ENCODE measurements at regions of chr15 and their contacts with region 1.

Region 1: GRCh38 chr15:97248376-97248775 is 712.1 kb upstream of the ARRDC4 start:
- DNase-seq: no peak
- ATAC-seq: no peak
- H3K4me3 ChIP-seq: no peak overlapping the region
- H3K27ac ChIP-seq: no peak overlapping the region
- H3K4me1 ChIP-seq: no peaks in the 10 kb centered on the region
- H3K27me3 ChIP-seq: no peaks in the 10 kb centered on the region
- CTCF ChIP-seq: no peak
- POLR2A ChIP-seq: no peak
- RAD21 ChIP-seq: no peak

Region 2: GRCh38 chr15:97009031-97009431 is 239.3 kb before region 1 on chr15:
- CTCF ChIA-PET with region 1: no interaction called
- POLR2A ChIA-PET with region 1: no interaction called
- dilution Hi-C with region 1: no loop called
- in situ Hi-C with region 1: no loop called
- intact Hi-C with region 1: no loop called
- DNase-seq: no peak
- ATAC-seq: no peak
- H3K4me3 ChIP-seq: no peak overlapping the region
- H3K27ac ChIP-seq: no peak overlapping the region
- H3K4me1 ChIP-seq: no peaks in the 10 kb centered on the region
- H3K27me3 ChIP-seq: no peaks in the 10 kb centered on the region
- CTCF ChIP-seq: no peak
- POLR2A ChIP-seq: no peak
- RAD21 ChIP-seq: no peak

Region 3: GRCh38 chr15:97234851-97235610 is 13.3 kb before region 1 on chr15:
- CTCF ChIA-PET with region 1: interaction called, 13 read pairs
- POLR2A ChIA-PET with region 1: no interaction called
- dilution Hi-C with region 1: no loop called
- in situ Hi-C with region 1: no loop called
- intact Hi-C with region 1: no loop called
- DNase-seq: peak; percentile 39
- ATAC-seq: peak; percentile 88
- H3K4me3 ChIP-seq: no peak overlapping the region
- H3K27ac ChIP-seq: no peak overlapping the region
- H3K4me1 ChIP-seq: no peaks in the 10 kb centered on the region
- H3K27me3 ChIP-seq: no peaks in the 10 kb centered on the region
- CTCF ChIP-seq: peak; percentile 78
- POLR2A ChIP-seq: no peak
- RAD21 ChIP-seq: peak; percentile 86

Region 4: GRCh38 chr15:98292442-98293240 is 1044.3 kb after region 1 on chr15:
- CTCF ChIA-PET with region 1: no interaction called
- POLR2A ChIA-PET with region 1: no interaction called
- dilution Hi-C with region 1: no loop called
- in situ Hi-C with region 1: no loop called
- intact Hi-C with region 1: loop called (anchors 5 kb)
- DNase-seq: no peak
- ATAC-seq: peak; percentile 48
- H3K4me3 ChIP-seq: no peak overlapping the region
- H3K27ac ChIP-seq: no peak overlapping the region
- H3K4me1 ChIP-seq: no peaks in the 10 kb centered on the region
- H3K27me3 ChIP-seq: no peaks in the 10 kb centered on the region
- CTCF ChIP-seq: peak; percentile 41
- POLR2A ChIP-seq: no peak
- RAD21 ChIP-seq: no peak